ENCODE measurements at regions of chr7 and their contacts with region 1.

Region 1: GRCh38 chr7:35424869-35425495 is 171.1 kb upstream of the TBX20 start:
- DNase-seq: peak; percentile 72

Region 2: GRCh38 chr7:35519971-35520809 is 95.2 kb after region 1 on chr7:
- CTCF ChIA-PET with region 1: interaction called, 11 read pairs
- POLR2A ChIA-PET with region 1: no interaction called
- DNase-seq: peak; percentile 82

Measured in HEK293T (cell line).